ENCODE measurements at regions of chr11 and their contacts with region 1.

Region 1: DNA sequence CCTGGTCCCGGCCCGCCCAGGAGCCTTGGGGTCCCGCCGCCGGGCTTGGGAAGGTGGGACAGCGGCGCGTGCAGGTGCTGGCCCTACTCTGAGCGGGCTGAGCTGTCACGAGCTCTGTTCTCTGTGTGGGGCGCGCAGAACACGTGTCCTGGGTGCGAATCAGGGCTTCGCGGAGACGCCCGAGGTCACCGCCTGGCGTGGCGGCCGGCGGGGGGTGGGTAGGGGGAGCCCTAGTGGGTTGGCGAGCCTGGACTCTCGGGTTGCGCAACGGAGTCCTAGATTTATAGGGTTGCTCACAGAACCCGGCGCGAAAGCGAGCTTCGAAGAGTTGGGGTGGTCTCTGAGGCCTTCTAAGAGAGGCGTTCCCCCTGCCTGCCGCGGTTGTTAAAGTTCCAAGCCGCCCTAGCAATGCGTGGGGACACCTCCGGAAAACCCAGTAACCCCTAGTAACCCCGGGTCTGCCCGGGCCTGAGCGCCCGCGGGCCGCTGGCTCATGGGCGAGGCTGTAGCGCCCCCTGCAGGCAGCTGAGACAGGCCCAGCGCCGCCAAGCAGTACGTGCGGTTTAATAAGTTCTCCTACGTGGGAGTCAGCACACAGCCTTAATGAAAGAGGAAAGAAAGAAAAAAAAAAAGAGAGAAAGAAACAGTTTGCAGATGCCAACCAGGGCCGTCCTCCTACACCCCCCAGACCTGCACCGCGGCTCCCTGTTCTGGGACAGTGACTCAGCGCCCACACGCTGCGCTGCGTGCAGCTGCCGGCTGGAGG is 2.8 kb downstream of the ADM start:
- DNase-seq: peak; percentile 80 to 93
- ATAC-seq: peak; percentile 67 to 85 (median 81)
- H3K4me3 ChIP-seq: peak overlapping the region; percentile 44
- H3K4me3 Mint-ChIP-seq: peak overlapping the region; percentile 94
- H3K27ac ChIP-seq: no peak overlapping the region
- H3K27ac Mint-ChIP-seq: peak overlapping the region; percentile 66 to 81
- H3K4me1 ChIP-seq: peaks cover 54% of the 10 kb centered on the region
- H3K4me1 Mint-ChIP-seq: peaks cover 48 to 51% of the 10 kb centered on the region in 2 donors
- H3K27me3 ChIP-seq: peaks cover 37% of the 10 kb centered on the region
- H3K27me3 Mint-ChIP-seq: peaks cover 42% of the 10 kb centered on the region in 2 donors
- CTCF ChIP-seq: peak; percentile 99

Region 2: GRCh38 chr11:9613118-9613829 is 694.4 kb before region 1 on chr11:
- intact Hi-C with region 1: loop called (anchors 1 kb)
- DNase-seq: peak; percentile 85 to 90
- ATAC-seq: peak; percentile 59 to 74 (median 68)
- H3K4me3 ChIP-seq: peak overlapping the region; percentile 51
- H3K4me3 Mint-ChIP-seq: peak overlapping the region; percentile 95
- H3K27ac ChIP-seq: peak overlapping the region; percentile 94
- H3K27ac Mint-ChIP-seq: peak overlapping the region; percentile 76 to 93
- H3K4me1 ChIP-seq: peaks cover 19% of the 10 kb centered on the region
- H3K4me1 Mint-ChIP-seq: peaks cover 20 to 22% of the 10 kb centered on the region in 2 donors
- H3K27me3 ChIP-seq: no peaks in the 10 kb centered on the region
- H3K27me3 Mint-ChIP-seq: peaks cover 0 to 6% of the 10 kb centered on the region in 2 donors
- CTCF ChIP-seq: peak; percentile 87

Region 3: DNA sequence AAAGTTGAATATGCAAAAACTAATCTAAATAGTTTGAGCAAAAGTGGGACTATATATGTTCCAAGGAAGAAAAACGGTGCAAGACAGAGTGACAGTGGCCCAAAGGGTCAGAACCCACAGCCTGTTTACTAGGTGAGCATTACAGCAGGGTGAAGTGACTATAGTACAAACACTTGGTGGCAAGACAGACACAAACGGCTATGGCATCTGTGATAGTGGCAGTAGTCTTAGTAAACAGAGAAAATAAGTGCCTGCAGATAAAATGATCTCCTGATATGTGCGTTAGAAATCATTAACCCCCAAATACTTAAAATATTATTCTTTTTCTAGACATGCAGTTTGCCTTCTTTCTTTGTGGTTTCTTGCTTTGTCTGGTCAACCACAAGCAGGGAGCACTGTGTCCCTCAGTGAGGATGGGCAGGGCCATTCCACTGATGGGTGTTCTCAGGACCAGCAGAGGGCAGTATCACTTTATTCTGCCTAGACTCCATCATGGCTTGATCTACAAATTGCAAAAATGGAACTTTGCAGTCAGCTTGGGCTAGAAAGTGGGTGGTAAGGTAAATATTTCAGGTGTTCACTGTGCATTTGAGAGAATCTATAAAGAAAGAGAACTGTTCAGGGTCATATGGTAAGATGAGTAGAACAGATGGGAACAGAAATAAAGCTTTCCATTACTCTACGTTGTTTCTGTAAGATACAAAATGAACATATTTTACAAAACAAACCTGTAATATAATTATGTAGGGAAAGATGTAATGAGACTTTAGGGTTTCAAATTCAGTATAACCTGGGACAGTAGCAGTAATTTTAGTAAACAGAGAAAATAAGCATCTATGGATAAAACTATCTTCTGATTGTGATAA is 445.5 kb before region 1 on chr11:
- intact Hi-C with region 1: loop called (anchors 1 kb)
- DNase-seq: peak in 1 of 2 donors; percentile 71
- ATAC-seq: peak; percentile 78 to 89 (median 81)
- H3K4me3 ChIP-seq: no peak overlapping the region
- H3K4me3 Mint-ChIP-seq: no peak overlapping the region
- H3K27ac ChIP-seq: no peak overlapping the region
- H3K27ac Mint-ChIP-seq: no peak overlapping the region
- H3K4me1 ChIP-seq: no peaks in the 10 kb centered on the region
- H3K4me1 Mint-ChIP-seq: peaks cover 6 to 8% of the 10 kb centered on the region in 2 donors
- H3K27me3 ChIP-seq: no peaks in the 10 kb centered on the region
- H3K27me3 Mint-ChIP-seq: no peaks in the 10 kb centered on the region
- CTCF ChIP-seq: peak; percentile 69

Region 4: GRCh38 chr11:10208131-10208575 is 99.5 kb before region 1 on chr11:
- intact Hi-C with region 1: loop called (anchors 1 kb)
- DNase-seq: peak in 1 of 2 donors; percentile 73
- ATAC-seq: peak; percentile 58 to 74 (median 68)
- H3K4me3 ChIP-seq: no peak overlapping the region
- H3K4me3 Mint-ChIP-seq: no peak overlapping the region
- H3K27ac ChIP-seq: no peak overlapping the region
- H3K27ac Mint-ChIP-seq: no peak overlapping the region
- H3K4me1 ChIP-seq: no peaks in the 10 kb centered on the region
- H3K4me1 Mint-ChIP-seq: no peaks in the 10 kb centered on the region
- H3K27me3 ChIP-seq: no peaks in the 10 kb centered on the region
- H3K27me3 Mint-ChIP-seq: no peaks in the 10 kb centered on the region
- CTCF ChIP-seq: peak; percentile 77

Region 5: DNA sequence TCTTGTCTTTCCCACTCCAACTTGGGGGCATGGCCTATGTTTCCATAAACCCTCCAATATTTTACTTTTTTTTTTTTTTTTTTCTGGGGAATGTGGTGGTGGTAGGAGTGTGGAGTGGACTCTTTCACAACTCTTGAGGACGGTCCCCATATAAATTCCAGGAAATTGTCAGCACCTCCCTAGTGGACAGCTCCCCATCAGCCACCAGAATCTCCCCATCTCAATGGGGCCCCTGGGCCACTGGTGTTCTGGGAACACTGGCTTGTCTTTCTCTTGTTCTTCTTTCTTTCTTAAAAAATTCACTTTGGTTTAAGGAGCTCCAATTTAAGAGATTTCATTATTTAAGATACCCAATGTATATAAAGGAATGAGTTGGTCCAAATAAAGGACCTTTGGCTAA is 71.4 kb after region 1 on chr11:
- intact Hi-C with region 1: no loop called
- DNase-seq: no peak
- ATAC-seq: no peak
- H3K4me3 ChIP-seq: no peak overlapping the region
- H3K4me3 Mint-ChIP-seq: no peak overlapping the region
- H3K27ac ChIP-seq: no peak overlapping the region
- H3K27ac Mint-ChIP-seq: no peak overlapping the region
- H3K4me1 ChIP-seq: no peaks in the 10 kb centered on the region
- H3K4me1 Mint-ChIP-seq: no peaks in the 10 kb centered on the region
- H3K27me3 ChIP-seq: peaks cover 4% of the 10 kb centered on the region
- H3K27me3 Mint-ChIP-seq: peaks cover 8 to 22% of the 10 kb centered on the region in 2 donors
- CTCF ChIP-seq: no peak

Region 6: DNA sequence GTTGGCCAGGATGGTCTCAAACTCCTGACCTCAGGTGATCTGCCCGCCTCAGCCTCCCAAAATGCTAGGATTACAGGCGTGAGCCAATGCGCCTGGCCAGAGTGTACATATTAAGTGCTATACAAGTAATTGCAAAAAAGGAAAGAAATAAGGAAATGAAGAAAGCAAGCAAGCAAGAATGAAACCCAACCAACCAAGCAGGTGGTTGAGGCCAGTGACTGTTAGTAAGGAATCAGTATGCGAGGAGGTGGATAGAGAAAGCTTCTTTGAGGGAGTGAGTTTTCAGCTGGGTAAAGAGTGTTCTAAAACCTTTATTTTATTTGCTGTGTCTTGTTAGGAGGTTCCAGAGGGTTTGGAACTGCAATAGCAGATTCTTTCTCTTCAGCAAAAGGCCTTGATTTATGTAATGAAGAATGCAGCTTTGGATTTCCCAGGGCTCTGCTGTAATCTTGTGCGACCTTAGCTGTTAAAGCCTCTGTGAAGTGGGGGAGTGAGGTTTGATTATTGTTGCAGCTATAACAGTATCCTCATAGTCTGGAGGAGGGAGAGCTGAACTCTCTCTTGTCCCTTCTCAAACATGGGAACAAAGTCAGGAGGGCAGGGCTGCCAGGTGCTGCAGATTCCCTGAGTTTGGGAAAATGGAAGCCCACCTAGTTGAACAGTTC is 153.1 kb after region 1 on chr11:
- intact Hi-C with region 1: no loop called
- DNase-seq: no peak
- ATAC-seq: no peak
- H3K4me3 ChIP-seq: no peak overlapping the region
- H3K4me3 Mint-ChIP-seq: no peak overlapping the region
- H3K27ac ChIP-seq: no peak overlapping the region
- H3K27ac Mint-ChIP-seq: no peak overlapping the region
- H3K4me1 ChIP-seq: peaks cover 47% of the 10 kb centered on the region
- H3K4me1 Mint-ChIP-seq: peaks cover 34 to 35% of the 10 kb centered on the region in 2 donors
- H3K27me3 ChIP-seq: no peaks in the 10 kb centered on the region
- H3K27me3 Mint-ChIP-seq: no peaks in the 10 kb centered on the region
- CTCF ChIP-seq: no peak

Measured in natural killer cell (primary cell).